MCF 10A (cell line): ENCODE measurements at regions of chr10 and their contacts with region 1.

Region 1: GRCh38 chr10:13074561-13075451 is 25.2 kb upstream of the OPTN start:
- DNase-seq: peak; percentile 79
- H3K4me3 Mint-ChIP-seq: no peak overlapping the region
- H3K27ac Mint-ChIP-seq: no peak overlapping the region
- H3K4me1 Mint-ChIP-seq: peaks cover 7% of the 10 kb centered on the region
- H3K27me3 Mint-ChIP-seq: no peaks in the 10 kb centered on the region
- CTCF ChIP-seq: peak; percentile 81

Region 2: GRCh38 chr10:12264204-12264940 is 810.4 kb before region 1 on chr10:
- CTCF ChIA-PET with region 1: interaction called, 8 read pairs
- POLR2A ChIA-PET with region 1: no interaction called
- intact Hi-C with region 1: loop called (anchors 1 kb)
- DNase-seq: peak; percentile 62
- H3K4me3 Mint-ChIP-seq: peak overlapping the region; percentile 62
- H3K27ac Mint-ChIP-seq: peak overlapping the region; percentile 40
- H3K4me1 Mint-ChIP-seq: peaks cover 8% of the 10 kb centered on the region
- H3K27me3 Mint-ChIP-seq: no peaks in the 10 kb centered on the region
- CTCF ChIP-seq: peak; percentile 90

Region 3: GRCh38 chr10:12720217-12720981 is 354.4 kb before region 1 on chr10:
- CTCF ChIA-PET with region 1: interaction called, 18 read pairs
- POLR2A ChIA-PET with region 1: interaction called, 3 read pairs
- intact Hi-C with region 1: loop called (anchors 1 kb)
- DNase-seq: peak; percentile 98
- H3K4me3 Mint-ChIP-seq: peak overlapping the region; percentile 43
- H3K27ac Mint-ChIP-seq: peak overlapping the region; percentile 79
- H3K4me1 Mint-ChIP-seq: peaks cover 26% of the 10 kb centered on the region
- H3K27me3 Mint-ChIP-seq: no peaks in the 10 kb centered on the region
- CTCF ChIP-seq: no peak

Region 4: GRCh38 chr10:12902135-12902572 is 172.7 kb before region 1 on chr10:
- CTCF ChIA-PET with region 1: interaction called, 13 read pairs
- POLR2A ChIA-PET with region 1: no interaction called
- intact Hi-C with region 1: loop called (anchors 1 kb)
- DNase-seq: peak; percentile 77
- H3K4me3 Mint-ChIP-seq: no peak overlapping the region
- H3K27ac Mint-ChIP-seq: no peak overlapping the region
- H3K4me1 Mint-ChIP-seq: peaks cover 4% of the 10 kb centered on the region
- H3K27me3 Mint-ChIP-seq: no peaks in the 10 kb centered on the region
- CTCF ChIP-seq: peak; percentile 86

Region 5: DNA sequence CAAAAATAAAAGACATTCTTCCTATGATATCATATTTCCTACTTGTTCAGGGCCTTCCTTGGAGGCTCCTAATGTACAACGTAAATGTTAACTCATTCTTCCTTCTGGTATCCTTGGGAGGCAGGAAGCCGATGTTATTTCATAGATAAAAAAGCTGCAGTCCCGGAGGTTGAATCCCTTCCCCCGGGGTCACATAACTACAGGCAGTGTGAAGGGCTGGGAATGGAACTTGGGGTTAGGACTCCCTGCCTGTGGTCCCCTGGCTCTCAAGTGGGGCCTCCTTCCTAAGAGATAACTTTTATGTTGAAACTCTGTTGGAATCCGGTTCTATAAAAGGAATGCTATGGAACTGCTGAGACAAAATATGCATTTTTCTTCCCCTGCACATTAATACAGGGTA is 58.4 kb before region 1 on chr10:
- CTCF ChIA-PET with region 1: no interaction called
- POLR2A ChIA-PET with region 1: no interaction called
- intact Hi-C with region 1: no loop called
- DNase-seq: no peak
- H3K4me3 Mint-ChIP-seq: no peak overlapping the region
- H3K27ac Mint-ChIP-seq: no peak overlapping the region
- H3K4me1 Mint-ChIP-seq: no peaks in the 10 kb centered on the region
- H3K27me3 Mint-ChIP-seq: peaks cover 7% of the 10 kb centered on the region
- CTCF ChIP-seq: no peak

Region 6: GRCh38 chr10:13062803-13063202 is 12.0 kb before region 1 on chr10:
- CTCF ChIA-PET with region 1: interaction called, 28 read pairs
- POLR2A ChIA-PET with region 1: no interaction called
- intact Hi-C with region 1: no loop called
- DNase-seq: no peak
- H3K4me3 Mint-ChIP-seq: no peak overlapping the region
- H3K27ac Mint-ChIP-seq: no peak overlapping the region
- H3K4me1 Mint-ChIP-seq: no peaks in the 10 kb centered on the region
- H3K27me3 Mint-ChIP-seq: no peaks in the 10 kb centered on the region
- CTCF ChIP-seq: no peak